AG04449 (cell line): ENCODE measurements at regions of chr3 and their contacts with region 1.

Region 1: GRCh38 chr3:115692887-115693524 is 69.7 kb downstream of the GAP43 start:
- DNase-seq: no peak
- H3K4me3 ChIP-seq: no peak overlapping the region
- CTCF ChIP-seq: peak; percentile 80

Region 2: GRCh38 chr3:115671761-115672455 is 21.1 kb before region 1 on chr3:
- CTCF ChIA-PET with region 1: interaction called, 14 read pairs
- POLR2A ChIA-PET with region 1: no interaction called
- DNase-seq: no peak
- H3K4me3 ChIP-seq: no peak overlapping the region
- CTCF ChIP-seq: no peak

Region 3: GRCh38 chr3:115704661-115705338 is 11.8 kb after region 1 on chr3:
- CTCF ChIA-PET with region 1: interaction called, 15 read pairs
- POLR2A ChIA-PET with region 1: no interaction called
- DNase-seq: no peak
- H3K4me3 ChIP-seq: no peak overlapping the region
- CTCF ChIP-seq: no peak

Region 4: GRCh38 chr3:115713284-115713683 is 20.3 kb after region 1 on chr3:
- CTCF ChIA-PET with region 1: interaction called, 11 read pairs
- POLR2A ChIA-PET with region 1: no interaction called
- DNase-seq: no peak
- H3K4me3 ChIP-seq: no peak overlapping the region
- CTCF ChIP-seq: no peak

Region 5: DNA sequence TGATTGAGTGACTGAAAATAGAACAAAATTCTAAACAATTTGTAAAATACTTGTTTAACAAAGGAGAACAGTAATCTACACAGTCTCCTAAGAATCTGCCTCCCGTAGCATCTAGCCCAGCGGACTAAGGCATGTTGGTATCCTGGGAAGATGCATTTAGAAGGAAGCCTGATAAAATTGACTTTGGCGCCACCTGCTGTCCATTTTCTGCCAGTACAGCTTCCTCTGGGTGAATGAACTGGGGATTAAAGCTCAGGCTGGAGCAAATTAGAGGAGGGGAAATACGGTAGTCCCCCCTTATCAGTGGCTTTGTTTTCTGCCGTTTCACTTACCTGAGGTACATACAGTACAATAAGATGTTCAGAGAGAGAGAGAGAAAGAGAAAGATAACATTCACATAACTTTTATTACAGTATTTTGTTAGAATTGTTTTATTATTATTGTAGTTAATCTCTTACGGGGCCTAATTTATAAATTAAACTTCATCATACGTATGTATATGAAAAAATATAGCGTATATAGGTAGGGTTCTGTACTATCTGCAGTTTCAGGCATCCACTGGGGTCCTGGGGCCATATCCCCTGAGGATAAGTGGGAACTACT is 121.9 kb after region 1 on chr3:
- CTCF ChIA-PET with region 1: interaction called, 20 read pairs
- POLR2A ChIA-PET with region 1: no interaction called
- DNase-seq: no peak
- H3K4me3 ChIP-seq: no peak overlapping the region
- CTCF ChIP-seq: peak; percentile 75